ENCODE measurements at regions of chr19 and their contacts with region 1.

Region 1: GRCh38 chr19:17555480-17555928 is at the start of gene COLGALT1:
- DNase-seq: peak; percentile 100
- ATAC-seq: peak; percentile 96
- H3K4me3 Mint-ChIP-seq: peak within 1 kb of the TSS; percentile 82
- H3K27ac Mint-ChIP-seq: peak within 1 kb of the TSS; percentile 67
- H3K4me1 Mint-ChIP-seq: peaks cover 21% of the 10 kb centered on the region
- H3K27me3 Mint-ChIP-seq: no peaks in the 10 kb centered on the region
- total RNA-seq, gene COLGALT1: 51.2 to 64.3 TPM

Region 2: GRCh38 chr19:17226002-17226933 is 329.2 kb before region 1 on chr19 and contains the start of gene OCEL1:
- CTCF ChIA-PET with region 1: no interaction called
- POLR2A ChIA-PET with region 1: no interaction called
- intact Hi-C with region 1: loop called in 1 of 2 experiments (anchors 1 kb)
- DNase-seq: peak; percentile 99
- ATAC-seq: peak; percentile 92
- H3K4me3 Mint-ChIP-seq: peak within 1 kb of the TSS; percentile 80
- H3K27ac Mint-ChIP-seq: peak within 1 kb of the TSS; percentile 93
- H3K4me1 Mint-ChIP-seq: peaks cover 7% of the 10 kb centered on the region
- H3K27me3 Mint-ChIP-seq: no peaks in the 10 kb centered on the region
- total RNA-seq, gene OCEL1: 10.9 to 11.7 TPM

Region 3: GRCh38 chr19:17390665-17391370 is 164.7 kb before region 1 on chr19:
- CTCF ChIA-PET with region 1: interaction called, 3 read pairs
- POLR2A ChIA-PET with region 1: no interaction called
- intact Hi-C with region 1: loop called in 1 of 2 experiments (anchors 1 kb)
- DNase-seq: peak; percentile 97
- ATAC-seq: peak; percentile 98
- H3K4me3 Mint-ChIP-seq: peak overlapping the region; percentile 83
- H3K27ac Mint-ChIP-seq: peak overlapping the region; percentile 33
- H3K4me1 Mint-ChIP-seq: peaks cover 24% of the 10 kb centered on the region
- H3K27me3 Mint-ChIP-seq: peaks cover 4% of the 10 kb centered on the region

Region 4: DNA sequence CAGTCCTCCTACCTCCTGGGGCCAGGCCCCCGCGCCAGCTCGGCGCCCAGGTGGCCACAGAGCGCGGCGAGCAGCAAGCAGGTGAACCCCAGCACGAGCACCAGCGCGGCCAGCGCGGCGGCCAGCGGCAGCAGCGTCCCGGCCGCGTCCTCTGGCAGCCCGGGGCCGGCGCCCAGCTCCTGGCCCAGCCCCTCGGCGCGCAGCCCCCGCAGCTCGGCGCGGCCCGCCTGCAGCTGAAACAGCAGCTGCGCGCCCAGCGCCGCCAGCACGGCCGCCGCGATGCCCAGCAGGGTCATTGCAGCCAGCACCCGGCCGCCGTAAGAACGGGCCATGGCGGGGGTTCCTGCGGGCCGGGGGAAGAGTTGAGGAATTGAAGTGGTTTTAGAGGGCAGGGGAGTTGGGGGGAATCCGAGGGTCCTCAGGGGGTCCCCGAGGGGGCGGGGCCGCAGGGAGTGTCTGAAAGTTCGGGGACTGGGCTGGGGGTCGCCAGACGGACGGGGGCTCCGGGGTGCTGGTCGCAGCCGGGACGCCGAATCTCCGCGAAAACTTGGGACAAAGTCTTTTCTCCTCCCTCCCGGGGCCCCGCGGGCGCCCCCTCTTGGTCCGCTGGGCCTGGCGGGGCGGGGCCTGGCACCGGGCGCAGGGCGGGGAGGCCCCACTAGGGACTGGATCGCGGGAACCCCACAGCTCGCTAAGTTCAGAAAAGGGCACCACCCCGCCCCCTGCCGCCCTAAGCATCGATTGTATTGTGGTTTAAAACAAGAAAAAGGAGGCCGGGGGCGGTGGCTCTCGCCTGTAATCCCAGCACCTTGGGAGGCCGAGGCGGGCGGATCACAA is 107.2 kb before region 1 on chr19 and contains the start of gene TMEM221:
- CTCF ChIA-PET with region 1: no interaction called
- POLR2A ChIA-PET with region 1: no interaction called
- intact Hi-C with region 1: loop called in 1 of 2 experiments (anchors 1 kb)
- DNase-seq: peak; percentile 77
- ATAC-seq: peak; percentile 57
- H3K4me3 Mint-ChIP-seq: no peak within 1 kb of the TSS
- H3K27ac Mint-ChIP-seq: no peak within 1 kb of the TSS
- H3K4me1 Mint-ChIP-seq: peaks cover 16% of the 10 kb centered on the region
- H3K27me3 Mint-ChIP-seq: peaks cover 14% of the 10 kb centered on the region
- total RNA-seq, gene TMEM221: not detected

Region 5: GRCh38 chr19:17539238-17540117 is 16.0 kb before region 1 on chr19:
- CTCF ChIA-PET with region 1: interaction called, 6 read pairs
- POLR2A ChIA-PET with region 1: interaction called, 4 read pairs
- intact Hi-C with region 1: loop called (anchors 1 kb)
- DNase-seq: peak; percentile 99
- ATAC-seq: peak; percentile 94
- H3K4me3 Mint-ChIP-seq: peak overlapping the region; percentile 71
- H3K27ac Mint-ChIP-seq: peak overlapping the region; percentile 47
- H3K4me1 Mint-ChIP-seq: peaks cover 10% of the 10 kb centered on the region
- H3K27me3 Mint-ChIP-seq: peaks cover 6% of the 10 kb centered on the region

Region 6: GRCh38 chr19:17605761-17606745 is 50.5 kb after region 1 on chr19:
- CTCF ChIA-PET with region 1: no interaction called
- POLR2A ChIA-PET with region 1: no interaction called
- intact Hi-C with region 1: loop called in 1 of 2 experiments (anchors 1 kb)
- DNase-seq: peak; percentile 90
- ATAC-seq: peak; percentile 89
- H3K4me3 Mint-ChIP-seq: peak overlapping the region; percentile 65
- H3K27ac Mint-ChIP-seq: no peak overlapping the region
- H3K4me1 Mint-ChIP-seq: peaks cover 8% of the 10 kb centered on the region
- H3K27me3 Mint-ChIP-seq: peaks cover 29% of the 10 kb centered on the region

Region 7: DNA sequence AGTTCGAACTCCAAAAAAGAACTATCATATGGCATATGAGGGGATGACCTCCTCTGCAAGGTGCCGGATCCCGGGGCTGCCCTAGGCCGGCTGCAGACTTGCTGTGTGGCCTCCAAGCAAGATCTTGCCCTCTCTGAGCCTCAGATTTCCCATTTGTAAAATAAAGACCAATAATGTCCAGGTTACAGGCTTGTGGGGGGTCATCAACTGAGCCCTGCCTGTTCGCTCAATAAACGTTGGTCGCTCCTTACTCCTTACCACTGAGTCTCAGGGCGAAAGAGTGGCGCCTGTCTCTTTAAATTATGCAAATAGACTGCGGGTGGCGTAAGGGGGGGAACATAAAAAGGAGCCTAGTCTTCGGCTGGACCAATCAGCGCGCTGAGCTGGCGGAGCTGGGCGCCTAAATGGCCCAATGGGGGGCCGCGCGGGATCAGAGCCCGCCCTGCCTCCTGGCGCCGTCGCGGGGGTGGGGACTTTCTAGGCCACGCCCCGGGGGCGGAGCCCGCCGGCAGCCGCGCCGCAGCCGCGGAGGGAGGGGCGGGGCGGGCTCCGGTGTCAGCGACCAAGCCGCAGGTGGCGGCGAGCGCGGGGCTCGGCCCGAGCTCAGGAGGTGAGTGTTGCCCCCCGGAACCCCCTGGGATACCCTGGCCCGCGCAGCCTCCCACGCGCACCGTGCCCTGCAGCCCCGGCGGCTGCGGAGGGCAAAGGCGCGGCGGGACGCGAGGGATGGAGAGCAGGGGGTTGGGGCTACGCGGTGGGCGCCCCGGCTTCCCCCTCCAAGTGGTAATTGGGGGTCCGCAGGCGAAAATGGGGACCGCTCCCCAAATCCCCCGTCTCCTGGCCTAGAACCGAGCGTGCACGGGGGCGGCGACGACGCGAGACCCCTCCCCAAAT is 191.9 kb after region 1 on chr19:
- CTCF ChIA-PET with region 1: no interaction called
- POLR2A ChIA-PET with region 1: no interaction called
- intact Hi-C with region 1: loop called in 1 of 2 experiments (anchors 1 kb)
- DNase-seq: peak; percentile 98
- ATAC-seq: peak; percentile 90
- H3K4me3 Mint-ChIP-seq: peak overlapping the region; percentile 76
- H3K27ac Mint-ChIP-seq: peak overlapping the region; percentile 60
- H3K4me1 Mint-ChIP-seq: peaks cover 42% of the 10 kb centered on the region
- H3K27me3 Mint-ChIP-seq: no peaks in the 10 kb centered on the region